Pancreas (tissue), 10 donors: ENCODE measurements at regions of chr2 and their contacts with region 1.

Region 1: DNA sequence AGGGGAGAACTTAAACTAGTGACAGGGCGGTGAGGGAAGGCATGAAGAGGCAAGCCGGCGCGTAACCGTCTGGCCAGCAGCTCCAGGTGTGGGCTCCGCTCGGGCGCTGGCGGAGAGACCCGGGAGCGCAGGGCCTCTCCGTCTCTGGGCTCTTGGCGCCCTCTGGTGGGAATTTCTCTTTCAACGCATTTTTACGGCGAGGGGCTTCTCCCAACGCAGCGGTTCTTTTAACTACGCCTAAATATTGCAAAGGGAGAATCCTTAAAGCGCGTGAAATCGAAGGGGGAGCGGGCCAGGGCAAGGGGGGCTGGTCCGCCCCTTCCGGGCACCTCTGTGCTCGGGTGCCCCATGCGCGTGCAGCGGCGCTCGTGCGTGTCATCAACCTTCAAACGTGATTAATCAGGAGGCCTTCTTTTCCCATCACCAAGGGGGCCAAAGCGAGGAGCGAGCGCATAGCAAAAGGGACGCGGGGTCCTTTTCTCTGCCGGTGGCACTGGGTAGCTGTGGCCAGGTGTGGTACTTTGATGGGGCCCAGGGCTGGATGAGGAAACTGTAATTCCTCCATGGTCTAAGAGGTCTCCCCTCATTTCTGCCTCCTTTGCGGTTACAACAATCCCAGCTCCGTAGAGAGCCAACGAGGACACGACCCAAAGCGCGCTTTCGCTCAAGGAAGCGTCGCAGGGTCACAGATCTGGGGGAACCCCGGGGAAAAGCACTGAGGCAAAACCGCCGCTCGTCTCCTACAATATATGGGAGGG is 762 bp upstream of the GAD1 start:
- DNase-seq: peak; percentile 59 to 85 (median 76)
- ATAC-seq: peak; percentile 78 to 85 (median 81)
- H3K4me3 ChIP-seq: peak overlapping the region in 3 of 4 donors; percentile 3 to 48 (median 31)
- H3K27ac ChIP-seq: no peak overlapping the region
- H3K4me1 ChIP-seq: peaks cover 3 to 19% (median 12%) of the 10 kb centered on the region in 3 donors
- H3K27me3 ChIP-seq: peaks cover 5 to 52% (median 22%) of the 10 kb centered on the region in 4 donors
- CTCF ChIP-seq: peak; percentile 58 to 72 (median 72)

Region 2: GRCh38 chr2:170361090-170361936 is 454.6 kb before region 1 on chr2:
- intact Hi-C with region 1: loop called in 2 of 3 experiments (anchors 10 kb)
- DNase-seq: peak in 5 of 6 donors; percentile 12 to 60 (median 20)
- ATAC-seq: peak; percentile 74 to 90 (median 86)
- H3K4me3 ChIP-seq: no peak overlapping the region
- H3K27ac ChIP-seq: no peak overlapping the region
- H3K4me1 ChIP-seq: no peaks in the 10 kb centered on the region
- H3K27me3 ChIP-seq: peaks cover 0 to 4% (median 0%) of the 10 kb centered on the region in 4 donors
- CTCF ChIP-seq: peak; percentile 39 to 57 (median 54)

Region 3: GRCh38 chr2:170369894-170370293 is 446.0 kb before region 1 on chr2:
- intact Hi-C with region 1: loop called (anchors 10 kb)
- DNase-seq: no peak
- ATAC-seq: peak in 2 of 4 donors; percentile 36 to 52
- H3K4me3 ChIP-seq: no peak overlapping the region
- H3K27ac ChIP-seq: no peak overlapping the region
- H3K4me1 ChIP-seq: no peaks in the 10 kb centered on the region
- H3K27me3 ChIP-seq: peaks cover 0 to 13% (median 3%) of the 10 kb centered on the region in 4 donors
- CTCF ChIP-seq: peak in 1 of 4 donors; percentile 11

Region 4: DNA sequence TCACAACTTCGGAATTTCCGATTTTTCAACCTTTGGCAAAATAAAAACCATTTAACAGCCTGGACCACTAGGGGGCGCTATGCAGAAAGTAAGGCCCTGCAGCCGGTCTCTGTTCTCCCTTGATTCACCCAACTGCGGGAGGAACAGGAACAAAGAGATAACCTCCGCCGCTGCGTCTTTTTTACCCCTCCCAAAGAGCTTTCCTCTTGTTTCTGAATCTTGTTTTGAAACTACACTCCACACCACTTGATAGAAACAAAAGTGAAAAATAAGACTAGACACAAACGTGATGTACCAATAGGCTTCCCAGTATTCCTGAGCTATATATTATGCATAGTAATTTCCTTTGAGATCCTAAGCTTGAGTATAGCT is 406.8 kb before region 1 on chr2:
- intact Hi-C with region 1: loop called in 2 of 3 experiments (anchors 5 to 10 kb)
- DNase-seq: peak in 5 of 6 donors; percentile 33 to 79 (median 67)
- ATAC-seq: peak; percentile 64 to 91 (median 84)
- H3K4me3 ChIP-seq: no peak overlapping the region
- H3K27ac ChIP-seq: no peak overlapping the region
- H3K4me1 ChIP-seq: no peaks in the 10 kb centered on the region
- H3K27me3 ChIP-seq: peaks cover 0 to 6% (median 0%) of the 10 kb centered on the region in 4 donors
- CTCF ChIP-seq: peak; percentile 79 to 93 (median 92)